CD4-positive, alpha-beta T cell (primary cell): ENCODE measurements at regions of chr20 and their contacts with region 1.

Region 1: DNA sequence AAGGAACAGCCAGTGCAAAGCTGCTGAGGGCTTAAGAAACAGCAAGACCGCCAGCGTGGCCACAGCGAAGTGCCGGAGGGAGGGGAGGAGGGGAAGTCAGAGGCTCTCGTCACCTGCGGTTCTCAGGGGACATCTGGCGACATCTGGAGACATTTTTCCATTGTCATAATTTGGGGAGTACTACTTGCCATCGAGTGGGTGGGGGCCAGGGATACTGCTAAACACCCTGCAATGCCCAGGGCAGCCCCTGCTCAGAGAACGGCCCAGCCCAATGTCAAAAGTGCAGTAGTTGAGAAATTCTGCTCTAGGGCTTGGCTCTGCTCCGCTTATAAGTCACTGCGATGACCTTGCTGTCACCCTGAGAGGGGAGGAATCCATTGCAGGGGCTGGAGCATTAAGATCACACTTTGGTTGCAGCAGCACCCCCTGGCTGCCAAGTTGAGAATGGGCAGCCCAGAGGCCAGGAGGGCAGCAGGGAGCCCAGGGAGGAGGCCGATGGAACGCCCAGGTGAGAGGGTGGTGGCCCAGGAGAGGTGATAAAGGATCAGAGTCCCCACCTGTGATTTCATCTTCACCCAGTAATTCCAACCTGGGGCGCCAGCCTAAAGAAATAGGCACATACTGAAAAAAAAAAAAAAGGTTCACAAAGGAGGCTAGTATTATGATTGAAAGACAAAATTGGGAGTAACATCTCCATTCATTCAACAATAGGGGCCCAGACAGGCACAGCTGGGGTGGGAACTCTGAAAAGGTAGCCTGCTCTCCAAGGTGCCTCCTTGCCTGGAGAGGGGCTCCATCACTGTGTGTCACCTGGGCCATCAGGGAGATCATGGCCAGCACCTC is 218.2 kb downstream of the BMP7 start:
- DNase-seq: peak in 1 of 14 experiments; percentile 3
- ATAC-seq: no peak
- H3K4me3 ChIP-seq: no peak overlapping the region
- H3K4me3 Mint-ChIP-seq: no peak overlapping the region
- H3K27ac ChIP-seq: no peak overlapping the region
- H3K27ac Mint-ChIP-seq: no peak overlapping the region
- H3K4me1 ChIP-seq: no peaks in the 10 kb centered on the region
- H3K4me1 Mint-ChIP-seq: no peaks in the 10 kb centered on the region
- H3K27me3 ChIP-seq: peaks cover 0 to 2% of the 10 kb centered on the region in 2 experiments
- H3K27me3 Mint-ChIP-seq: peaks cover 6% of the 10 kb centered on the region
- CTCF ChIP-seq: peak; percentile 13

Region 2: GRCh38 chr20:56540420-56540819 is 507.8 kb before region 1 on chr20:
- CTCF ChIA-PET with region 1: no interaction called
- POLR2A ChIA-PET with region 1: no interaction called
- intact Hi-C with region 1: loop called in 1 of 2 experiments (anchors 5 kb)
- DNase-seq: no peak
- ATAC-seq: no peak
- H3K4me3 ChIP-seq: no peak overlapping the region
- H3K4me3 Mint-ChIP-seq: no peak overlapping the region
- H3K27ac ChIP-seq: no peak overlapping the region
- H3K27ac Mint-ChIP-seq: no peak overlapping the region
- H3K4me1 ChIP-seq: no peaks in the 10 kb centered on the region
- H3K4me1 Mint-ChIP-seq: no peaks in the 10 kb centered on the region
- H3K27me3 ChIP-seq: no peaks in the 10 kb centered on the region
- H3K27me3 Mint-ChIP-seq: no peaks in the 10 kb centered on the region
- CTCF ChIP-seq: no peak

Region 3: GRCh38 chr20:57148263-57148662 is 100.0 kb after region 1 on chr20:
- CTCF ChIA-PET with region 1: no interaction called
- POLR2A ChIA-PET with region 1: no interaction called
- intact Hi-C with region 1: no loop called
- DNase-seq: no peak
- ATAC-seq: no peak
- H3K4me3 ChIP-seq: no peak overlapping the region
- H3K4me3 Mint-ChIP-seq: no peak overlapping the region
- H3K27ac ChIP-seq: no peak overlapping the region
- H3K27ac Mint-ChIP-seq: no peak overlapping the region
- H3K4me1 ChIP-seq: no peaks in the 10 kb centered on the region
- H3K4me1 Mint-ChIP-seq: no peaks in the 10 kb centered on the region
- H3K27me3 ChIP-seq: peaks cover 5 to 6% of the 10 kb centered on the region in 2 experiments
- H3K27me3 Mint-ChIP-seq: peaks cover 32% of the 10 kb centered on the region
- CTCF ChIP-seq: no peak